HCT116 (cell line): ENCODE measurements at regions of chr11 and their contacts with region 1.

Region 1: DNA sequence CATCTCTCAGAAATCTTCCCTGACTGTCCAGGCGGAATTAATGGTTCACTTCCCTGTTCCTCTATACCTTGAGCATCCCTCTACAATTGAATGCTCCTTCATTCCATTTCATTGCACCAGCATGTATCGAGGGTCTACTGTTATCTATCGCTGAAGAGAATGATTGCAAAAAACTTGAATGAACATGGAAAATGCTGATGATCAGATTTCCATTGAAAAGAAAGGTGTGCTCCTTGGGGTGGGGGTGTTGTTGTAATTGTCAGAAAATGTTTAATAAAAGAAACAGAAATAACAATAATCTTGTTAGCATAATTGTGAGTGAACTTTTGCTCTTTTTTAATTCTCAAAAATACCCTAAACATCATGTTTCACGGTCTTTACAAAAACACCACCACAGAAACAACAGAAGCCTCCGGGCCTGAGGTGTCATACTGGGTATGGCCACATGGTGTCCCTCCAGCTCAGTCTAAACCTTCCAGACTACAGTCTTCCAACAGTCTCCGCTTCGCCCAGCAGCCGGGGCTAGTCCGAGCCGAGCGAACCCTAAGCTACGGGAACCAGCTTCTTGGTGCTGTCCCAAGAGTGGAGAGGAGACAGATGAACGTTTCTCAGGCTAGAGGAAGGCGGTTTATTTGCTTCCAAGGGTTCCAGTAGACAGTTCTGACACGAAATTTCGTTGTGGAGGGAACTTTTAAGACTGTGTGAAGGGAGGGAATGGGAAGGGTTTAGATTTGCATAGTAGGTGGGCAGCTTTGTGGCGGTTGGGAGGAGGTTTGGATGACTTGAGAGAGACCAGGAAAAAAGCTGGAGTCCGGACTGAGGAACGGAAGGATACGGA is 75.8 kb upstream of the ZBED5 start:
- DNase-seq: peak; percentile 85
- ATAC-seq: peak; percentile 81
- H3K4me3 ChIP-seq: peak overlapping the region; percentile 40 to 63
- H3K27ac ChIP-seq: peak overlapping the region; percentile 60
- H3K4me1 ChIP-seq: peaks cover 9 to 39% of the 10 kb centered on the region in 2 experiments
- H3K27me3 ChIP-seq: no peaks in the 10 kb centered on the region
- CTCF ChIP-seq: peak; percentile 94 to 98 (median 97)
- POLR2A ChIP-seq: no peak
- RAD21 ChIP-seq: peak; percentile 96

Region 2: DNA sequence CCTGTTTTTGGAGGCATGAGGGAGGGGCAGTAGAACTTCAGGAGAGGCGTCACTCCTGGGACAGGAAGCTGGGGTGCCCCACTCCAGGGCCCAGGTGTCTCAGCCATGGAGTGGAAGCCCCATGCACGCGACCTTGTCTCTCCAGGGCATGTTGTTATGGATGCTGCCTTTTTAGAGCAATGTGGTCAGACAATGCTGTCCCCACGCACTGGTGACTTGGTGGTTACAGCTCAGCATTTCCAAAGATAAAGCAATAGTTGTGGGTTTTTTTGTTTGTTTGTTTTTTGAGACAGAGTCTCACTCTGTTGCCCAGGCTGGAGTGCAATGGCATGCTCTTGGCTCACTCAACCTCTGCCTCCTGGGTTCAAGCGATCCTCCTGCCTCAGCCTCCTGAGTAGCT is 147.2 kb before region 1 on chr11:
- CTCF ChIA-PET with region 1: no interaction called
- POLR2A ChIA-PET with region 1: no interaction called
- RAD21 ChIA-PET with region 1: no interaction called
- intact Hi-C with region 1: no loop called
- DNase-seq: no peak
- ATAC-seq: no peak
- H3K4me3 ChIP-seq: no peak overlapping the region
- H3K27ac ChIP-seq: no peak overlapping the region
- H3K4me1 ChIP-seq: no peaks in the 10 kb centered on the region
- H3K27me3 ChIP-seq: no peaks in the 10 kb centered on the region
- CTCF ChIP-seq: no peak
- POLR2A ChIP-seq: no peak
- RAD21 ChIP-seq: no peak

Region 3: GRCh38 chr11:10808553-10809372 is 124.9 kb before region 1 on chr11 and contains the start of gene EIF4G2:
- CTCF ChIA-PET with region 1: interaction called, 15 read pairs
- POLR2A ChIA-PET with region 1: interaction called, 26 read pairs
- RAD21 ChIA-PET with region 1: interaction called in 1 of 2 experiments, 3 read pairs
- intact Hi-C with region 1: loop called (anchors 5 kb)
- DNase-seq: peak; percentile 95
- ATAC-seq: peak; percentile 94
- H3K4me3 ChIP-seq: peak within 1 kb of the TSS; percentile 89 to 97
- H3K27ac ChIP-seq: peak within 1 kb of the TSS; percentile 100
- H3K4me1 ChIP-seq: peaks cover 10 to 24% of the 10 kb centered on the region in 2 experiments
- H3K27me3 ChIP-seq: no peaks in the 10 kb centered on the region
- CTCF ChIP-seq: no peak
- POLR2A ChIP-seq: peak; percentile 99
- RAD21 ChIP-seq: no peak
- total RNA-seq, gene EIF4G2: 888 TPM

Region 4: DNA sequence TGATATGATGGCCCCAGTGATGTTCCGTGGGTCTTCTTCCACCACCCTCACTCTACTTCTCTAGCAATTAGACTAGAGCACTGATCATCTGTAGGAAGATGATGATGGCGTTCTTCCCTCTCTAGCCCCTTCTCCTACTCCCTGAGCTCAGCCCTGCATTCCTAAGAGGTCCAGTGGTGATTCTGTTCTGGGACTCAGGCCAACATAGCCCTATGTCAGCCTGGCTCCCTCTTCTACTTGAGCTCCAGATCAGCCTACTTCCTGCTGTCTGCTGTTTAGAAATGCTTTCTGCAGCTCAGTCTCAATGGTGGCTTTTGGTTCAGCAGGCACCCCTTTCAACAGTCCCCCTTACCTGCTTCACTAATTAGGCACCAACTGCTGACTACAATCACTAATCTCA is 10.3 kb after region 1 on chr11:
- CTCF ChIA-PET with region 1: interaction called, 21 read pairs
- POLR2A ChIA-PET with region 1: interaction called, 5 read pairs
- RAD21 ChIA-PET with region 1: interaction called in 1 of 2 experiments, 5 read pairs
- intact Hi-C with region 1: no loop called
- DNase-seq: no peak
- ATAC-seq: no peak
- H3K4me3 ChIP-seq: no peak overlapping the region
- H3K27ac ChIP-seq: no peak overlapping the region
- H3K4me1 ChIP-seq: no peaks in the 10 kb centered on the region
- H3K27me3 ChIP-seq: no peaks in the 10 kb centered on the region
- CTCF ChIP-seq: no peak
- POLR2A ChIP-seq: no peak
- RAD21 ChIP-seq: no peak

Region 5: DNA sequence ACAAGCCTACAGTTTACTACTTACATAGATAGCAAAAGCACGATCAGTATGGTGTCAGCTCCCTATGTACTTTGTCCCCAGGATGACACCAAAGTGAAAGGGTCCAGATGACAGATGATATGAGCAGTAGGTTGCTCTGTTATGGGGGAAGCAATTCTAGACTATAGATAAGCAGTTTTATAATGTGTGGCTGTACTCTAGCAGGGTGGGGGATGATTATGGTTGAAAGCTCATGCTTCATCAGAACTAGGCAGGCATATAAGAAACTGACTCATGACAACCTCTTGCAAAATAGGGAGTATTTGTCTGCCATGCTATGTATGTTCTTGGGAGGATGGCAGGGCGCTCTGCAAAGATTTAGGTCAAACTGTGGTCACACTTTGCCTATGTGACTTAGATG is 82.4 kb after region 1 on chr11:
- CTCF ChIA-PET with region 1: interaction called, 56 read pairs
- POLR2A ChIA-PET with region 1: interaction called, 5 read pairs
- RAD21 ChIA-PET with region 1: interaction called, 4 to 19 read pairs
- intact Hi-C with region 1: no loop called
- DNase-seq: no peak
- ATAC-seq: no peak
- H3K4me3 ChIP-seq: no peak overlapping the region
- H3K27ac ChIP-seq: no peak overlapping the region
- H3K4me1 ChIP-seq: peaks cover 0 to 1% of the 10 kb centered on the region in 2 experiments; a peak in 2 of 4 replicates
- H3K27me3 ChIP-seq: no peaks in the 10 kb centered on the region
- CTCF ChIP-seq: no peak
- POLR2A ChIP-seq: no peak
- RAD21 ChIP-seq: no peak

Region 6: DNA sequence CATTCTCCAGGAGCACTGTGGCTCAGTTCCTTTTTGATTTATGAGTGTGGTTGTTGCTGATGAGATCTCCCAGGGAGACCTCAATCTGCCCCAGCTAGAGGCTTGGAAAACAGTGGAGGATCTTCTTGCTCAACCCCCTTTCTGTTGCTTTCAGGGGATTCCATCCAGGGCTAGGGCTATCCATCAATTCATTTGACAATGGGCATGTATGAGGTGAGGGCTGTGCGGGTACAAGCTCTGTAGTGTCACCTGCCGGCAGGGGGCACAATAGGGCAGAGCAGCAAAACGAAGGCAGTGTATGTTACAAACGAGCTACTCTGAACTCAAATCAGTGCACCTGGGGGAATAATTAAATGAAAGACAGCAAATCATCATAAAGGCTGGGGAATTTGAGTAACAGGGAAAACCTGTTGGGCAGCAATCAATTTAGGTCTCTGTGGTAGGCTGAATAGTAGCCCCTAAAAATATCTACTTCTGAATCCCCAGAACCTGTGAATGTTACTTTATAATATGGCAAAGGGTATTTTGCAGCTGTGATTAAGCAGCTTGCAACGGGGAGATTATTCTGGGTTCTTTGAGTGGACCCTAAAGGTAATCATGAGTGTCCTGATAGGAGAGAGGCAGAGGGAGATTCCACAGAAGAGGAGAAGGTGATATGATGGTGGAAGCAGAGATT is 94.5 kb after region 1 on chr11:
- CTCF ChIA-PET with region 1: interaction called, 38 read pairs
- POLR2A ChIA-PET with region 1: interaction called, 3 read pairs
- RAD21 ChIA-PET with region 1: interaction called, 6 to 8 read pairs
- intact Hi-C with region 1: no loop called
- DNase-seq: peak; percentile 47
- ATAC-seq: peak; percentile 100
- H3K4me3 ChIP-seq: no peak overlapping the region
- H3K27ac ChIP-seq: no peak overlapping the region
- H3K4me1 ChIP-seq: peaks cover 0 to 6% of the 10 kb centered on the region in 2 experiments; a peak in 1 of 4 replicates
- H3K27me3 ChIP-seq: no peaks in the 10 kb centered on the region
- CTCF ChIP-seq: peak; percentile 76 to 95 (median 92)
- POLR2A ChIP-seq: no peak
- RAD21 ChIP-seq: peak; percentile 89

Region 7: GRCh38 chr11:11621573-11622319 is 688.1 kb after region 1 on chr11 and contains the start of gene GALNT18:
- CTCF ChIA-PET with region 1: no interaction called
- POLR2A ChIA-PET with region 1: no interaction called
- RAD21 ChIA-PET with region 1: no interaction called
- intact Hi-C with region 1: loop called (anchors 5 kb)
- DNase-seq: peak; percentile 81
- ATAC-seq: peak; percentile 87
- H3K4me3 ChIP-seq: peak within 1 kb of the TSS; percentile 85 to 91
- H3K27ac ChIP-seq: peak within 1 kb of the TSS; percentile 58
- H3K4me1 ChIP-seq: peaks cover 17 to 23% of the 10 kb centered on the region in 2 experiments; a peak in 3 of 4 replicates
- H3K27me3 ChIP-seq: no peaks in the 10 kb centered on the region
- CTCF ChIP-seq: peak; percentile 20 to 42 (median 29); a peak in 3 of 6 replicates
- POLR2A ChIP-seq: peak; percentile 18
- RAD21 ChIP-seq: peak; percentile 25; the same call in 1 of the 2 replicates
- total RNA-seq, gene GALNT18: 19.9 TPM

Region 8: GRCh38 chr11:12043959-12044819 is 1110.5 kb after region 1 on chr11:
- CTCF ChIA-PET with region 1: interaction called, 4 read pairs
- POLR2A ChIA-PET with region 1: no interaction called
- RAD21 ChIA-PET with region 1: no interaction called
- intact Hi-C with region 1: loop called (anchors 5 kb)
- DNase-seq: peak; percentile 92
- ATAC-seq: peak; percentile 88
- H3K4me3 ChIP-seq: peak overlapping the region; percentile 27 to 43; a peak in 3 of 4 replicates
- H3K27ac ChIP-seq: peak overlapping the region; percentile 51; the same call in 1 of the 2 replicates
- H3K4me1 ChIP-seq: peaks cover 8 to 45% of the 10 kb centered on the region in 2 experiments; a peak in 2 of 4 replicates
- H3K27me3 ChIP-seq: no peaks in the 10 kb centered on the region
- CTCF ChIP-seq: peak; percentile 84 to 97 (median 93)
- POLR2A ChIP-seq: no peak
- RAD21 ChIP-seq: peak; percentile 99